PC-9 (cell line): ENCODE measurements at regions of chr20 and their contacts with region 1.

Region 1: DNA sequence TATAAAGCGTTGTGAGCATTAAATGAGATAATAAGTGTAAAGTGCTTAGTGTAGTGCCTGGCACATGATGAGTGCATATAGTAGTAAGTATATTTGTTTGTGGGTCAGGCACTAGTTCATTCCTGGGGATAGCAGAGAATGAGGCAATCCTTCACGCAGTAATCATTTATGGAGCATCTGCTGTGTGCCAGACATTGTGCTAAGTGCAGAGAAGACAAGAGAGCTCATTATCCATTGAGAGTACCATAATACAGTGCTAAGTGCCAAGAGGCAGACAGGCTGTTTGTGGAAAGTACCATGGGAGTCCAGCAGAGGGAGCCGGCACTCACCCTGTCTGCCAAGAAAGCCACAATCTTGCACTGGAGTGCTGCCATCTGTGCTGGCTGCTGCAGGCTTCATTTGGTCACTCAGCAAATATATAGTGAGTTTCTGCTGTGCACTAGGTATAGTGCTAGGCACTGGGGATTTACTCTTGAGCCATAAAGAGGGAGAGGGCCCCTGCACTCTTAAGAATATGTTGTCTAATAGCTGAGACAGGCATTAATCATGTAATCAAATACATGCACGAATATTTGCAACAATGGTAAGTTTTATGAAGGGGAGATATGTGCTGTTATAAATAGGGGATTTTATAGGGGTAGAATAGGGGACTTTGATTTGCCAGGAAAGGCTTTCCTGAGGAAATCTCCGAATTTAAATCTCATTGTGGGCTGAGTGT is 12.9 kb upstream of the MROH8 start:
- DNase-seq: peak; percentile 51 to 75
- H3K4me3 ChIP-seq: no peak overlapping the region
- H3K27ac ChIP-seq: no peak overlapping the region
- H3K4me1 ChIP-seq: no peaks in the 10 kb centered on the region
- H3K27me3 ChIP-seq: no peaks in the 10 kb centered on the region
- CTCF ChIP-seq: peak; percentile 86

Region 2: GRCh38 chr20:36591854-36592641 is 600.2 kb before region 1 on chr20:
- CTCF ChIA-PET with region 1: no interaction called
- POLR2A ChIA-PET with region 1: no interaction called
- intact Hi-C with region 1: no loop called
- DNase-seq: peak in 1 of 2 experiments; percentile 61
- H3K4me3 ChIP-seq: no peak overlapping the region
- H3K27ac ChIP-seq: no peak overlapping the region
- H3K4me1 ChIP-seq: no peaks in the 10 kb centered on the region
- H3K27me3 ChIP-seq: no peaks in the 10 kb centered on the region
- CTCF ChIP-seq: peak; percentile 43; the same call in 1 of the 2 replicates

Region 3: GRCh38 chr20:37178839-37179670 is 13.2 kb before region 1 on chr20 and contains the starts of genes MROH8 and RPN2:
- CTCF ChIA-PET with region 1: interaction called, 6 read pairs
- POLR2A ChIA-PET with region 1: interaction called, 11 read pairs
- intact Hi-C with region 1: no loop called
- DNase-seq: peak; percentile 90 to 99
- H3K4me3 ChIP-seq: peak within 1 kb of the TSS; percentile 88
- H3K27ac ChIP-seq: peak within 1 kb of the TSS; percentile 87
- H3K4me1 ChIP-seq: peaks cover 15% of the 10 kb centered on the region
- H3K27me3 ChIP-seq: no peaks in the 10 kb centered on the region
- CTCF ChIP-seq: no peak
- total RNA-seq, gene MROH8: 3.3 TPM in 2 replicates
- total RNA-seq, gene RPN2: 164 and 185 TPM in 2 replicates

Region 4: DNA sequence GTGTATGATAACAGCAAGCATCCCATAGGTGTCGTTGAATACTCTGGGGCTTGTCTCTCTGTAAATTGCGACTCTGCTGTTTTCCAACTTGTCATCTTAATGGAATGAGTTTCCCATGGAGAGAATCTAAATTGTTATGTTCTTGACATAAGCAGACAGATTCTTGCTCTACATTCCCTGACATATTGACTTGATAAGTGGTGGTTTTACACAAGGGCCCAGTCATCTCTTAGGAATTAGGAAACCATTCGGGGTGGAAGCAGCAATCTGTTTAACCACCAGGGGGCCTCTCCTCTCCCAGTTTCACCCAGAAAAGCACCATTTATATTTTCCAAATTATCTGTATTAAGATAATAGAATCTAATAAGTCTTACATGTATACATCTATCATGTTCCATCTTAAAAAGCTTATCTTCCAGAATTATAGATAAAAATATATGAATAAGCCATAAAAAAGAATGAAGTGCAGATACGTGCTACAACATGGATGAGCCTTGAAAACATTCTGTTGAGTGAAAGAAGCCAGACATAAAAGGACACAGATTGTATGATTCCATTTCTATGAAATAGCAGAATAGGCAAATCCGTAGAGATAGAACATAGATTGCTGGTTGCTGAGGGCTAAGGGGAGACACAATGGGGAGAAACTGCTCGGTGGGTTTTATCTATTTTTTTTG is 10.1 kb after region 1 on chr20:
- CTCF ChIA-PET with region 1: interaction called, 10 read pairs
- POLR2A ChIA-PET with region 1: no interaction called
- intact Hi-C with region 1: no loop called
- DNase-seq: peak; percentile 57 to 92
- H3K4me3 ChIP-seq: no peak overlapping the region
- H3K27ac ChIP-seq: peak overlapping the region; percentile 40
- H3K4me1 ChIP-seq: peaks cover 9% of the 10 kb centered on the region
- H3K27me3 ChIP-seq: no peaks in the 10 kb centered on the region
- CTCF ChIP-seq: peak; percentile 89

Region 5: DNA sequence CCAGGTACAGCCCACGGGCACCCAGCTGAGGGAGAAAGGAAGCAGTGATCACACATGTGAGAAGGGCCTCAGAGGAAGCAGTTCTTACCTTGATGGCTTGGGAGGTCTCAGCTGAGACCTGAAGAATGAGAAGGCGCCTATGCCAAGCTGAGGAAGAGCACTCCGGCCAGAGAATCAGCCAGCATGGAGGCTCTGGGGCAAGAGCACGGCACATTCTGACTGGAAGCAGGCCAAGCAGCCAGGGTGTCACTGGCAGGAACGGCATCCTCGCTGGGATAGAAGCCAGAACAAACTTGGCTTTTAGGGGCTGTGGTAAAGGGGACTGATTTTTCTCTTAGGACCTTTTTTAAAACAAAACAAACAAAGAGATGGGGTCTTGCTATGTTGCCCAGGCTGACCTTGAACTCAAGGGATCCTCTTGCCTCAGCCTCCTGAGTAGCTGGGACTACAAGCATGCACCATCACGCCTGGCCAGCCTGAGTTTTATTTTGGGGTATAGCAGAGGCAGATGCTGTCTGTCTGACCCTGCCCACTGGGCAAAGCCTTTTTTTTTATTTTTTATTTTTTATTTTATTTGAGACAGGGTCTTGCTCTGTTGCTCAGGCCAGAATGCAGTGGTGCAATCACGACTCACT is 51.8 kb after region 1 on chr20:
- CTCF ChIA-PET with region 1: no interaction called
- POLR2A ChIA-PET with region 1: no interaction called
- intact Hi-C with region 1: no loop called
- DNase-seq: no peak
- H3K4me3 ChIP-seq: no peak overlapping the region
- H3K27ac ChIP-seq: no peak overlapping the region
- H3K4me1 ChIP-seq: no peaks in the 10 kb centered on the region
- H3K27me3 ChIP-seq: no peaks in the 10 kb centered on the region
- CTCF ChIP-seq: no peak

Region 6: GRCh38 chr20:37265152-37265551 is 72.9 kb after region 1 on chr20:
- CTCF ChIA-PET with region 1: interaction called, 6 read pairs
- POLR2A ChIA-PET with region 1: no interaction called
- intact Hi-C with region 1: loop called (anchors 5 kb)
- DNase-seq: no peak
- H3K4me3 ChIP-seq: no peak overlapping the region
- H3K27ac ChIP-seq: no peak overlapping the region
- H3K4me1 ChIP-seq: no peaks in the 10 kb centered on the region
- H3K27me3 ChIP-seq: peaks cover 17% of the 10 kb centered on the region
- CTCF ChIP-seq: no peak

Region 7: GRCh38 chr20:37534401-37535157 is 342.3 kb after region 1 on chr20:
- CTCF ChIA-PET with region 1: interaction called, 3 read pairs
- POLR2A ChIA-PET with region 1: no interaction called
- intact Hi-C with region 1: loop called (anchors 1 kb)
- DNase-seq: peak; percentile 64 to 68
- H3K4me3 ChIP-seq: no peak overlapping the region
- H3K27ac ChIP-seq: no peak overlapping the region
- H3K4me1 ChIP-seq: no peaks in the 10 kb centered on the region
- H3K27me3 ChIP-seq: no peaks in the 10 kb centered on the region
- CTCF ChIP-seq: peak; percentile 85

Region 8: GRCh38 chr20:38406476-38406875 is 1214.2 kb after region 1 on chr20:
- CTCF ChIA-PET with region 1: no interaction called
- POLR2A ChIA-PET with region 1: no interaction called
- intact Hi-C with region 1: loop called (anchors 10 kb)
- DNase-seq: no peak
- H3K4me3 ChIP-seq: no peak overlapping the region
- H3K27ac ChIP-seq: no peak overlapping the region
- H3K4me1 ChIP-seq: no peaks in the 10 kb centered on the region
- H3K27me3 ChIP-seq: no peaks in the 10 kb centered on the region
- CTCF ChIP-seq: no peak